Gastrocnemius medialis (tissue), 4 donors: ENCODE measurements at regions of chr18 and their contacts with region 1.

Region 1: GRCh38 chr18:10560450-10561045 is 34.7 kb downstream of the NAPG start:
- DNase-seq: peak; percentile 23 to 51
- ATAC-seq: peak; percentile 70 to 71
- H3K4me3 ChIP-seq: peak overlapping the region; percentile 2 to 50 (median 11)
- H3K27ac ChIP-seq: no peak overlapping the region
- H3K4me1 ChIP-seq: peaks cover 3 to 7% of the 10 kb centered on the region in 2 donors
- H3K27me3 ChIP-seq: no peaks in the 10 kb centered on the region
- CTCF ChIP-seq: peak; percentile 63 to 79 (median 67)
- POLR2A ChIP-seq: no peak

Region 2: GRCh38 chr18:10270151-10270571 is 290.4 kb before region 1 on chr18:
- in situ Hi-C with region 1: no loop called
- intact Hi-C with region 1: no loop called
- DNase-seq: no peak
- ATAC-seq: peak; percentile 54 to 65
- H3K4me3 ChIP-seq: no peak overlapping the region
- H3K27ac ChIP-seq: peak overlapping the region in 2 of 4 donors; percentile 21 to 28
- H3K4me1 ChIP-seq: no peaks in the 10 kb centered on the region
- H3K27me3 ChIP-seq: no peaks in the 10 kb centered on the region
- CTCF ChIP-seq: no peak
- POLR2A ChIP-seq: no peak

Region 3: DNA sequence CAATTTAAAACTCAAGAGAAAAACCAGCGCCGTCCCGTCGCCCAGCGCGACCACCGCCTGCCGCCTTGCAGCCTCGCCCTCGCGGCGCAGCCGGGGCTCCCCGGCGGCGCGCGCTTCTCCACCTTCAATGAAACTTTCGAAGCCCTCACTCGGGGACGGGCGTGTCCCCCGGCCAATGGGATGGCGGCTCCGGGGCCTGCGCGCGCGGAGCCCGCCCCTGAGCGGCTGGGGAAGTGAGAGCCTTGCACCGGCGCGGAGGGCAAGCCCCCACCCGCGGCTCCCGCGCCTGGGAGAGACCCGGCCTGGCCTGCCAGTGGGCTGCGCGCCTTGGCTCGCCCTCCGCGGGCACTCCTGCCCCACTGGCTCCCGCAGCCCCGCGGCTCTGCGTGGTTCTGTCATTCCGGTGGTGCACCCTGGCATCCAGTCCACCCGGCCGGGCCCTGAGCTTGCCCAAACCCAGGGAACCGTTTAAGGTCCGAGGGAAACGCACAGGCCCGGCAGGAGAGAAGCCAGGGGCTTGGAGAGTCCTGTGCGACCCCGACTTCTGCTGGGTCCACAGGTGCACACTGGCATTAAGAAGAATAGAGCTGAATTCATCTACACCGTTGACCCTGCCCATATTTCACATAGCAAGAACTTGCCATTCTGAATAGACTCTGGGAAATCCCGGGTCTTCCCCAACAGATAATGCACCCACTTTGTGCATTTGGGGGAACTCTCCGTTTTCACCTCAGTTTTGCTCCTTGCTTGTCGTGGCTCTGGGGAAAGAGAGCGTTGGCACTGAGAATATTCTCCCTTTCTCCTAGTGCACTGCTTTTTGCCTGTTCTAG is 589.1 kb after region 1 on chr18 and contains the start of gene PIEZO2:
- in situ Hi-C with region 1: loop called (anchors 10 to 25 kb)
- intact Hi-C with region 1: loop called (anchors 2 kb)
- DNase-seq: peak; percentile 17 to 57
- ATAC-seq: peak; percentile 80 to 82
- H3K4me3 ChIP-seq: peak within 1 kb of the TSS; percentile 53 to 63 (median 62)
- H3K27ac ChIP-seq: no peak within 1 kb of the TSS
- H3K4me1 ChIP-seq: peaks cover 0 to 6% of the 10 kb centered on the region in 2 donors
- H3K27me3 ChIP-seq: peaks cover 6 to 18% (median 15%) of the 10 kb centered on the region in 3 donors
- CTCF ChIP-seq: no peak
- POLR2A ChIP-seq: peak in 1 of 2 donors; percentile 24
- total RNA-seq, gene PIEZO2: 0.18 to 3.0 (median 0.21) TPM

Region 4: GRCh38 chr18:11553098-11553940 is 992.8 kb after region 1 on chr18:
- in situ Hi-C with region 1: loop called (anchors 10 to 25 kb)
- intact Hi-C with region 1: loop called (anchors 5 kb)
- DNase-seq: no peak
- ATAC-seq: peak; percentile 69 to 82
- H3K4me3 ChIP-seq: no peak overlapping the region
- H3K27ac ChIP-seq: no peak overlapping the region
- H3K4me1 ChIP-seq: no peaks in the 10 kb centered on the region
- H3K27me3 ChIP-seq: no peaks in the 10 kb centered on the region
- CTCF ChIP-seq: peak; percentile 75 to 87 (median 79)
- POLR2A ChIP-seq: no peak